Activated CD4-positive, alpha-beta T cell treated with anti-CD3 and anti-CD28 coated beads for 36 hours (primary cell): ENCODE measurements at regions of chr16 and their contacts with region 1.

Region 1: DNA sequence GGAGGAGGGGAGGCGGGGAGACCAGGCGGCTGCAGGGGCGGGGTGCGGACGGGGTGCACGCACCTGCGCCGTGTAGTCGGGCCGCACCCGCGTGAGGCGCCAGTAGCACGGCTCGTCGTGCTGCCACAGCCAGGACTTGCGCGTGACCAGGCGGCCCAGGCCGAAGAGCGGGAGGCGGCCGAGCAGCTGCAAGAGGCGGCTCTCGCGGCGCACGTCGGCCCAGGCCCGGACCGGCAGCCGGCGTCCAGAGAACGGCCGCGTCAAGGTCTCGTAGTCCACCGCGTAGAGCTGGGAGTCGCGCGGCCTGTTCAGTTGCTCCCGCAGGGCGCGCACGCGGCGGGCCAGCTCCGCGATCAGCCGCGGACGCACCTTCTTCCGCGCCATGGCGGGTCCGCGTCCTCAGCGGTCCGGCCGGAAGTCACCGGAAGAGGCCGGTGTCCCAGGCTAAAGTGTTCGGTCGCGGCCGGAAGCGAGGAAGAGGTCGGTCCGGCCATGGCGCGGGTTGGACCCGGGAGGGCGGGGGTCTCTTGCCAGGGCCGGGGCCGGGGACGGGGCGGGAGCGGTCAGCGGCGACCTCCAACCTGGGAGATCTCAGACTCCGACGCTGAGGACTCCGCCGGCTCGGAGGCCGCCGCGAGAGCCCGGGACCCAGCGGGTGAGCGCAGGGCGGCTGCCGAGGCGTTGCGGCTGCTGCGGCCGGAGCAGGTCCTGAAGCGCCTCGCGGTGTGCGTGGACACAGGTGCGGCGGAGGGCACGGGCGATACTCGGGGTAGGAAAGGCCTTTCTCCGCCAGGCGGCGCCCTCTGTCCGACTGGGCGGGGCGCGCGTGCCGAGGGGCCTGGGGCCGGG is at the starts of genes EME2 and MRPS34:
- DNase-seq: peak; percentile 90
- ATAC-seq: peak; percentile 53
- H3K4me3 Mint-ChIP-seq: peak within 1 kb of the TSS; percentile 94
- H3K27ac Mint-ChIP-seq: peak within 1 kb of the TSS; percentile 99
- H3K4me1 Mint-ChIP-seq: peaks cover 9% of the 10 kb centered on the region
- H3K27me3 Mint-ChIP-seq: no peaks in the 10 kb centered on the region
- total RNA-seq, gene EME2: 13.1 to 18.4 TPM
- total RNA-seq, gene MRPS34: 146 to 175 TPM

Region 2: DNA sequence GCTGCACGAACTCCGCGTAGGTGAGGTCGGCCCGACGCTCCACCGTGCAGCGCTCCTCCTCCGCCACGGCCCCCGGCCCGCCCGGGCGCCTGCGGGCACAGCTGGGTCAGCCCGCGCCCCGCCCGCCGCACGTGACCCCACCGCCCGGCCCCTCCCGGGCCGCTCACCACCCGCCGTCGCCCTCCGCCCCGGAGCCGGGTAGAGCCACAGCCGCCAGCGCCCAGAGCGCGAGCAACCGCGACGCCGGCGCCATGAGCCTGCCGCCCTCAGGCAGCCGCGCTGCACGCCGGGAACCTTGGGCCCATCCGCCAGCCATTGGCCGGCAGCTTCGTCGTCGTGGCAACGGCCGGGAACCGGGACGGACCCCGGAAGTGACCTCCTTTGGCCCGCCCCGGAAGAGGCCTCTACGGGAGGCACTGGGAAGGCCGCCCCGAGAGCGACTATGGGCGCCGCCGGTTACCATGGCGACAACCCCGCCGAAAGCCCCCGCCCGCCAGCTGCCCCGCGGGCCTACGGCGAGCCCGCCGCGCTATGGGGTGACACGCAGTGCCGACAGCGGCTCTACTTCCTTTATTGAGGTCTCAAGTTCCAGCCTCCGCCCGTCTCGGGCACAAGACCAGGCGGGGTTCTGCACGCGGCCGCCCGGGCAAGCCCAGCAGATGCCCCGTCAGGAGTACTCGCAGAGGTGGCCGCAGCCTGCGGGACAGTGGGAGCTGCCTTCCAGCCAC is 1088.7 kb before region 1 on chr16 and contains the start of gene JMJD8:
- CTCF ChIA-PET with region 1: no interaction called
- POLR2A ChIA-PET with region 1: no interaction called
- intact Hi-C with region 1: loop called in 1 of 2 experiments (anchors 5 kb)
- DNase-seq: peak; percentile 99
- ATAC-seq: peak; percentile 80
- H3K4me3 Mint-ChIP-seq: peak within 1 kb of the TSS; percentile 76
- H3K27ac Mint-ChIP-seq: peak within 1 kb of the TSS; percentile 58
- H3K4me1 Mint-ChIP-seq: peaks cover 40% of the 10 kb centered on the region
- H3K27me3 Mint-ChIP-seq: no peaks in the 10 kb centered on the region
- total RNA-seq, gene JMJD8: 26.1 to 31.4 TPM

Region 3: GRCh38 chr16:1533443-1533951 is 239.5 kb before region 1 on chr16 and contains the start of gene TMEM204:
- CTCF ChIA-PET with region 1: no interaction called
- POLR2A ChIA-PET with region 1: no interaction called
- intact Hi-C with region 1: loop called in 1 of 2 experiments (anchors 2 kb)
- DNase-seq: peak; percentile 66
- ATAC-seq: peak; percentile 25
- H3K4me3 Mint-ChIP-seq: peak within 1 kb of the TSS; percentile 95
- H3K27ac Mint-ChIP-seq: peak within 1 kb of the TSS; percentile 94
- H3K4me1 Mint-ChIP-seq: peaks cover 39% of the 10 kb centered on the region
- H3K27me3 Mint-ChIP-seq: no peaks in the 10 kb centered on the region
- total RNA-seq, gene TMEM204: 12.6 to 17.5 TPM

Region 4: GRCh38 chr16:1705688-1706385 is 67.1 kb before region 1 on chr16 and contains the start of gene MAPK8IP3:
- CTCF ChIA-PET with region 1: interaction called, 4 read pairs
- POLR2A ChIA-PET with region 1: no interaction called
- intact Hi-C with region 1: loop called (anchors 1 to 5 kb)
- DNase-seq: peak; percentile 96
- ATAC-seq: peak; percentile 80
- H3K4me3 Mint-ChIP-seq: peak within 1 kb of the TSS; percentile 92
- H3K27ac Mint-ChIP-seq: peak within 1 kb of the TSS; percentile 90
- H3K4me1 Mint-ChIP-seq: peaks cover 32% of the 10 kb centered on the region
- H3K27me3 Mint-ChIP-seq: no peaks in the 10 kb centered on the region
- total RNA-seq, gene MAPK8IP3: 56.7 to 57.6 TPM

Region 5: GRCh38 chr16:1745181-1745899 is 27.6 kb before region 1 on chr16:
- CTCF ChIA-PET with region 1: no interaction called
- POLR2A ChIA-PET with region 1: no interaction called
- intact Hi-C with region 1: no loop called
- DNase-seq: no peak
- ATAC-seq: no peak
- H3K4me3 Mint-ChIP-seq: no peak overlapping the region
- H3K27ac Mint-ChIP-seq: no peak overlapping the region
- H3K4me1 Mint-ChIP-seq: no peaks in the 10 kb centered on the region
- H3K27me3 Mint-ChIP-seq: no peaks in the 10 kb centered on the region

Region 6: DNA sequence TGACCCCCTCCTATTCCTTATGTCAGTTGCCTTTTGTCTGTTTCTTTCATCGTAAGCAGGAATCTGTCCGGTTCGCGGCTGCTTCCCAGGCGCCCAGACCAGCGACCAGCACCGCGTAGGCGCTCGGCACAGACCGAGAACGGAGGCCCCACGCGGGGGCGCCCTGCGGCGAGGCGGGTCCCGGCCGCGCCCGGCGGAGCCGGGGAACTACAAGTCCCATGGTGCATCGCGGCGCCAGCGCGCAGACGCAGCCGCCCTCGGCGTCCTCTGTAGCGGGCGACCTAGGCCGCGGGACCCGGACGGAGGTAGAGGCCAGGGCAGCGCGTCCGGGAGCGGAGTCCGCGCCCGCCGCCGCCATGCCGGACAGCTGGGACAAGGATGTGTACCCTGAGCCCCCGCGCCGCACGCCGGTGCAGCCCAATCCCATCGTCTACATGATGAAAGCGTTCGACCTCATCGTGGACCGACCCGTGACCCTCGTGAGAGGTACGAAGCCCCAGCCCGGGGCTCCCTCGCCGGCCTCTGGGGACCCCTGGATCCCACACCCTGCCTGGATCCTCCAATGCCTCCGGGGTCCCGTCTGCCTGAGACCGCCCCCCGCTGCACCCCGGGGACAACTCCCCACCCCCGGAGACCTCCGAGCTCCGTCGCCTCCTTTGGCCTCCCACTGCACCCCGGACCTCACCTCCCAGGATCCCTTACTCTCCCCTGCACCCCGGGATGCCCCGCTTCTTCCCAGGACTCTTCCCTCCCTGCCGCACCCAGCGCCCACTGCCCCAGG is 186.5 kb after region 1 on chr16 and contains the start of gene NDUFB10:
- CTCF ChIA-PET with region 1: no interaction called
- POLR2A ChIA-PET with region 1: interaction called, 3 read pairs
- intact Hi-C with region 1: loop called in 1 of 2 experiments (anchors 2 kb)
- DNase-seq: peak; percentile 96
- ATAC-seq: peak; percentile 77
- H3K4me3 Mint-ChIP-seq: peak within 1 kb of the TSS; percentile 96
- H3K27ac Mint-ChIP-seq: peak within 1 kb of the TSS; percentile 95
- H3K4me1 Mint-ChIP-seq: peaks cover 34% of the 10 kb centered on the region
- H3K27me3 Mint-ChIP-seq: no peaks in the 10 kb centered on the region
- total RNA-seq, gene NDUFB10: 113 to 118 TPM

Region 7: DNA sequence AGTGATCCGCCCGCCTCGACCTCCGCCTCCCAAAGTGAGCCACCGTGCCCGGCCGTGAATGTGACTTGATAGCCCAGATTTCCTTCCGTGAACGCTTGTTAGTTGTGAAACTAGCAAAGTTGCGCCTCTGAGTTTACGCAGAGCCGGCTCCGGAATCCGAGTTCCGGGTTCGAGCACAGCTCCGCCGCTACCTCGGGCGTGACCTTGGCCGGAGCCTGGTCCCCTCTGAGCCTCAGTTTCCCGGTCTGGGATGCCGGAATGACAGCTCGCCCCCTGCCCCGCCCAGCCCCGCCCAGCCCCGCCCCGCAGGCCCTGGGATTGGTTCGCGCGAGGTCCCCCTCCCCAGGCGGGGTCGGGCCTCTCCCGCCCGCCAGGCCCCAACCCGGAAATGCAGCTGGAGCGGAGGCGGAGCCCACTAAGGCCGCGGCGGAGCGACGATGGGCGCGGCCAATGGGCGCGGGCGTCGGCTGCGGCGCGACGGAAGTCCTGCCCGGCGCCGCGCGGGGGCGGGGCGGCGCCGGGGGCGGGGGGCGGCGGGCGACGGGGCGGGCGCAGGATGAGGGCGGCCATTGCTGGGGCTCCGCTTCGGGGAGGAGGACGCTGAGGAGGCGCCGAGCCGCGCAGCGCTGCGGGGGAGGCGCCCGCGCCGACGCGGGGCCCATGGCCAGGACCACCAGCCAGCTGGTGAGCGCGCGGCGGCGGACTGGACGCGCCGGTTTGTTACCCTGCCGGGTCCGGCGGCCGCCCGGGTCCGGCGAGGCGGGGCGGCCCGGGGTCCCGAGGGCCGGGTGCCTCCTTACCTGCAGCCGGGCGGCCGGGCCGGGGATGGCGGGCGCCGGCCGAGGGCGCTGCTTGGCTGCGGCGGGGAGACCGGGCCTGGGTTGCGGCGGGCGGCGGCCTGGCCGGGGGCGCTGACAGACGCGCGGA is 764.8 kb after region 1 on chr16 and contains the start of gene PDPK1:
- CTCF ChIA-PET with region 1: no interaction called
- POLR2A ChIA-PET with region 1: no interaction called
- intact Hi-C with region 1: loop called in 1 of 2 experiments (anchors 2 kb)
- DNase-seq: peak; percentile 97
- ATAC-seq: peak; percentile 93
- H3K4me3 Mint-ChIP-seq: peak within 1 kb of the TSS; percentile 83
- H3K27ac Mint-ChIP-seq: peak within 1 kb of the TSS; percentile 90
- H3K4me1 Mint-ChIP-seq: peaks cover 38% of the 10 kb centered on the region
- H3K27me3 Mint-ChIP-seq: no peaks in the 10 kb centered on the region
- total RNA-seq, gene PDPK1: 30.4 to 34.5 TPM